CD14-positive monocyte (primary cell): ENCODE measurements at regions of chr6 and their contacts with region 1.

Region 1: GRCh38 chr6:18122124-18123093 is at the start of gene NHLRC1:
- DNase-seq: peak; percentile 89 to 95 (median 92)
- H3K4me3 ChIP-seq: peak within 1 kb of the TSS; percentile 26 to 69 (median 26)
- H3K4me3 Mint-ChIP-seq: peak within 1 kb of the TSS; percentile 68 to 81
- H3K27ac ChIP-seq: peak within 1 kb of the TSS in 1 of 2 donors; percentile 74
- H3K27ac Mint-ChIP-seq: peak within 1 kb of the TSS; percentile 62 to 89 (median 77)
- H3K4me1 ChIP-seq: peaks cover 10 to 18% of the 10 kb centered on the region in 2 donors
- H3K4me1 Mint-ChIP-seq: peaks cover 13% of the 10 kb centered on the region
- H3K27me3 ChIP-seq: no peaks in the 10 kb centered on the region
- H3K27me3 Mint-ChIP-seq: peaks cover 0 to 3% (median 2%) of the 10 kb centered on the region in 3 donors
- CTCF ChIP-seq: peak; percentile 90
- polyA plus RNA-seq, gene NHLRC1: 0.75 to 3.1 (median 1.4) TPM

Region 2: GRCh38 chr6:17156112-17156921 is 966.1 kb before region 1 on chr6:
- intact Hi-C with region 1: loop called in 1 of 2 experiments (anchors 10 kb)
- DNase-seq: peak; percentile 20 to 54 (median 40)
- H3K4me3 ChIP-seq: no peak overlapping the region
- H3K4me3 Mint-ChIP-seq: no peak overlapping the region
- H3K27ac ChIP-seq: no peak overlapping the region
- H3K27ac Mint-ChIP-seq: no peak overlapping the region
- H3K4me1 ChIP-seq: no peaks in the 10 kb centered on the region
- H3K4me1 Mint-ChIP-seq: no peaks in the 10 kb centered on the region
- H3K27me3 ChIP-seq: peaks cover 0 to 2% of the 10 kb centered on the region in 2 donors
- H3K27me3 Mint-ChIP-seq: peaks cover under 1 to 6% (median 4%) of the 10 kb centered on the region in 3 donors
- CTCF ChIP-seq: peak; percentile 86

Region 3: GRCh38 chr6:17831135-17831534 is 291.3 kb before region 1 on chr6:
- intact Hi-C with region 1: loop called (anchors 10 kb)
- DNase-seq: no peak
- H3K4me3 ChIP-seq: no peak overlapping the region
- H3K4me3 Mint-ChIP-seq: no peak overlapping the region
- H3K27ac ChIP-seq: peak overlapping the region in 1 of 2 donors; percentile 36
- H3K27ac Mint-ChIP-seq: peak overlapping the region in 1 of 7 donors; percentile 27
- H3K4me1 ChIP-seq: no peaks in the 10 kb centered on the region
- H3K4me1 Mint-ChIP-seq: peaks cover 3% of the 10 kb centered on the region
- H3K27me3 ChIP-seq: no peaks in the 10 kb centered on the region
- H3K27me3 Mint-ChIP-seq: peaks cover 0 to 2% (median 0%) of the 10 kb centered on the region in 3 donors
- CTCF ChIP-seq: no peak

Region 4: DNA sequence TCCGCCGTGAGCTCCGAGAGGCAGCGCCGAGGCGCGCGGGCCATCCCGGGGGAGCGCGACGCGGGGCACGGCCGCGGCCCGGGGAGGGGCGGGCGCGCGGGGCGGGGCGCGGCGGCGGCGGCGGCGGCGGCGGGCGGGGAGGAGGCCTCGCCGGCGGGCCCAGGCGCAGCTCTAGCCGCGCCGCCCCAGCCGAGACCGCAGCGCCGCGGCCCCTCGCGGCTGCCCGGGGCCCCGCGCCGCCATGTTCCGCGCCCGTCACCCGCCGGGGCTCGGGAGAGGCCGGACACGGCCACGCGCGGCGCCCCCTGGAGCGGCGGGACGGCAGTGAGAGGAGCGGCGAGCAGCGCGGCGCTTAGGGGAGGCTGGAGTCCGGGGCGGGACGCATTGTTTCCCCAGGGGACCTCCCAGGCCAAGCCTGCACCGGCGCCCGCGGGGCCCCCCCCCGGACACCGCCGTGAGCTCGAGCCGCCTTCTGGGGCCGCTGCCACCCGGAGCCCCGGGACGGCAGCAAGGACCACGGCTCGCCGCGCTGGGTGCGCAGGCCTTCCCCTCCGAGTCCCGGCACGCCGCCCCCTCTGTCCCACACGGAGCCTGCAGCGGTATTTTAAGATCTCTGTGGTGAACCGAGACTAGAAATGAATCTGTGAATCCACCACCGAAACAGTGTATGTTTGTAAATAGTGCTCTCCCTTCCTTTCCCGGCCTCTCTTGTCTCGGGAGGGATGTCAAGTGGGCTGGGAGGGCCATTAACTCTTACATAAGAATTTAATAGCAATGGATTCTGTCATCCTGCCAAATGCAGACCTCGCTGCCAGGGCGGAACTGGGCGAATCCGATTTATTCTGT is 134.6 kb before region 1 on chr6 and contains the start of gene KIF13A:
- intact Hi-C with region 1: loop called (anchors 5 to 10 kb)
- DNase-seq: peak; percentile 43 to 62 (median 60)
- H3K4me3 ChIP-seq: peak within 1 kb of the TSS; percentile 69 to 99 (median 92)
- H3K4me3 Mint-ChIP-seq: peak within 1 kb of the TSS; percentile 94 to 99
- H3K27ac ChIP-seq: peak within 1 kb of the TSS; percentile 91 to 95
- H3K27ac Mint-ChIP-seq: peak within 1 kb of the TSS; percentile 90 to 99 (median 97)
- H3K4me1 ChIP-seq: peaks cover 52 to 55% of the 10 kb centered on the region in 2 donors
- H3K4me1 Mint-ChIP-seq: peaks cover 51% of the 10 kb centered on the region
- H3K27me3 ChIP-seq: no peaks in the 10 kb centered on the region
- H3K27me3 Mint-ChIP-seq: peaks cover 0 to 4% (median 4%) of the 10 kb centered on the region in 3 donors
- CTCF ChIP-seq: peak; percentile 29
- polyA plus RNA-seq, gene KIF13A: 2.9 to 28.4 (median 6.0) TPM

Region 5: DNA sequence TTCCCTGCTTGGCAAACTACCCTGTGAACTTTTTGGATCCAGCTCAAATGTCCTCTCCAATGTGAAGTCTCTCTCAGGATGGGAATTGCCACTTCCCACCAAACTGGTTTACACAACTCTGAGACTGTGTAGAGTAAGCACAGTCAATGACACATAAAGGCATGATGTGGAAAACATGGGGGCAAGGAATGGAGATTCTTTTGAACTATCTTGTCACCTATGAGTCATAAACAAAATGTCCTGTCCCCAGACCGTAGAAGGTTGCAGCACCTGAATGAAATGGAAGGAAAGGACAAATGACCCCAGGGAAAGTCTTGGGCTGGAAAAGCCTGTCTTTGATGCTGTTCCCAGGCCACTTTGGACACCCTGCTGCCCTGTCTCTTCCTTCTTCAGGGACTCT is 124.0 kb before region 1 on chr6:
- intact Hi-C with region 1: loop called in 1 of 2 experiments (anchors 10 kb)
- DNase-seq: peak in 2 of 3 donors; percentile 38 to 74
- H3K4me3 ChIP-seq: no peak overlapping the region
- H3K4me3 Mint-ChIP-seq: no peak overlapping the region
- H3K27ac ChIP-seq: no peak overlapping the region
- H3K27ac Mint-ChIP-seq: peak overlapping the region in 2 of 7 donors; percentile 53 to 74
- H3K4me1 ChIP-seq: peaks cover 17 to 27% of the 10 kb centered on the region in 2 donors
- H3K4me1 Mint-ChIP-seq: peaks cover 27% of the 10 kb centered on the region
- H3K27me3 ChIP-seq: no peaks in the 10 kb centered on the region
- H3K27me3 Mint-ChIP-seq: peaks cover 6 to 8% (median 6%) of the 10 kb centered on the region in 3 donors
- CTCF ChIP-seq: no peak

Region 6: DNA sequence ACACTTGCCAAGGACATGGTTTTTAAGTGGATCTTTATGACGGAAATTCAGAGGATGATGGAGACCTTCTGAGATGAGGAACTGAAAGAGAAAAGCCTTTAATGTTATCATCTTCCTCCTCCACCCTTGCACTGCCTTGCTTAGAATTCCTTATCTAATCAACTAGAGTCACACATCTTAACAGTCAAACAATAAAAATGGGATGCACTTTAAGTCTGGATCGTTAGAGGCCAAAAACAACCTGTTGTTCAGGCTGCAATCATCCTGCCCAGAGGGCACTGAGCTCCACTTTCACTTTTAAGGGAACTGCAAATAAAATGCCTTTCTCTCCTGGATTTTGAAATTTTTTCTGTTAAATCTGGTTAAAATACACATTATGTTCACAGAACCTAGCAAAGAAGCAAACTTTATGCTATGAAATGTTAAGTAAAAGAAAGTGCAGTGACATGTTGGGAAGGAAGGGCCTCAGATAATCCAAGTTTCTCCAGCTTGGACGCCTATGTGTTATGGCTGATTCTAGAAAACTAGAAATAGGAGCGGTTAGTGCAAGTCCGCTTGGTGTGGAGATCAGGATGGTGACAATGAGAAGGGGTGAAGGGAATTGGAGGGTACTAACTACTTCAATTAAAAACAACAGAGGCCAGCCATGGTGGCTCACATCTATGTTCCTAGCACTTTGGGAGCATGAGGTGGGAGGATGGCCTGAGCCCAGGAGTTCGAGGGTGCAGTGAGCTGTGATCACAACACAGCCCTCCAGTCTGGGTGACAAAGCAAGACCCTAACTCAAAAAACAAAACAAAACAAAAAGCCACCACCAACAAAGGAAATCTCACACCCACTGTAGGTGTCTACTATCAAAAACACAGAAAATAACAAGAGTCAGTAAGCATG is 68.6 kb before region 1 on chr6:
- intact Hi-C with region 1: no loop called
- DNase-seq: no peak
- H3K4me3 ChIP-seq: no peak overlapping the region
- H3K4me3 Mint-ChIP-seq: no peak overlapping the region
- H3K27ac ChIP-seq: no peak overlapping the region
- H3K27ac Mint-ChIP-seq: peak overlapping the region in 1 of 7 donors; percentile 21
- H3K4me1 ChIP-seq: no peaks in the 10 kb centered on the region
- H3K4me1 Mint-ChIP-seq: peaks cover 11% of the 10 kb centered on the region
- H3K27me3 ChIP-seq: no peaks in the 10 kb centered on the region
- H3K27me3 Mint-ChIP-seq: peaks cover 0 to 2% (median 1%) of the 10 kb centered on the region in 3 donors
- CTCF ChIP-seq: no peak

Region 7: DNA sequence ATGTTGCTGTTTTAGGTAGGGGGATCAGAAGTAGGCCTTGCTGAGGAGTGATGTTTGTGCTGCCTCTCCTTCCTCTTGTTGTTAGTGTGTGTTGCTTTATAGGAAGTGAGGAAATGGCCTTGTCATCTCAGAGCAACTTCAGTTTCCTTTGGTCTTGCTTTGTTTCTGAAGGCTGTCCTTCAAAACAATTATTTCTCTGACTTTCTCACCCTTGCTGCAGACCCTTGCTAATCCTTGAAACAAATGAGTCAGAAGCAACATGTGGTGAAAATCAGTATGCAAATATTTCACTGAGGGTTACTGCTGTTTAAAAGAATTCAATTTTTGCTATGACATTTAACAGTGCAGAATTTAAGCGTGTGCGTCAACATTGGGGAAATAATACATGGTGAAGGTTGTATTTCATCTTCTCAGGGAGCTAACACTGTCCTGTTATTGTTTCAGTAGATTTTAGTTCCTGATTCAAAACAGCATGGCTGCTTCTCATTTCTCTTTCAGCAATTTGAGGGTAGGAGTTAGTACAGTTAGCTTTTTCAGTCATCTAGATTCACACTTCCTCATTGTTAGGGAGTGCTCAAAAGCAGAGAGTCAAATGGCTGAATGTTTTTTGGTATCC is 278.5 kb after region 1 on chr6:
- intact Hi-C with region 1: no loop called
- DNase-seq: peak; percentile 70 to 84 (median 82)
- H3K4me3 ChIP-seq: peak overlapping the region in 2 of 3 experiments; percentile 4 to 44
- H3K4me3 Mint-ChIP-seq: peak overlapping the region in 1 of 2 donors; percentile 80
- H3K27ac ChIP-seq: peak overlapping the region; percentile 18 to 89
- H3K27ac Mint-ChIP-seq: peak overlapping the region; percentile 91 to 99 (median 96)
- H3K4me1 ChIP-seq: peaks cover 49 to 72% of the 10 kb centered on the region in 2 donors
- H3K4me1 Mint-ChIP-seq: peaks cover 53% of the 10 kb centered on the region
- H3K27me3 ChIP-seq: no peaks in the 10 kb centered on the region
- H3K27me3 Mint-ChIP-seq: peaks cover 0 to 2% (median 0%) of the 10 kb centered on the region in 3 donors
- CTCF ChIP-seq: no peak